A673 (cell line): ENCODE measurements at regions of chr19 and their contacts with region 1.

Region 1: DNA sequence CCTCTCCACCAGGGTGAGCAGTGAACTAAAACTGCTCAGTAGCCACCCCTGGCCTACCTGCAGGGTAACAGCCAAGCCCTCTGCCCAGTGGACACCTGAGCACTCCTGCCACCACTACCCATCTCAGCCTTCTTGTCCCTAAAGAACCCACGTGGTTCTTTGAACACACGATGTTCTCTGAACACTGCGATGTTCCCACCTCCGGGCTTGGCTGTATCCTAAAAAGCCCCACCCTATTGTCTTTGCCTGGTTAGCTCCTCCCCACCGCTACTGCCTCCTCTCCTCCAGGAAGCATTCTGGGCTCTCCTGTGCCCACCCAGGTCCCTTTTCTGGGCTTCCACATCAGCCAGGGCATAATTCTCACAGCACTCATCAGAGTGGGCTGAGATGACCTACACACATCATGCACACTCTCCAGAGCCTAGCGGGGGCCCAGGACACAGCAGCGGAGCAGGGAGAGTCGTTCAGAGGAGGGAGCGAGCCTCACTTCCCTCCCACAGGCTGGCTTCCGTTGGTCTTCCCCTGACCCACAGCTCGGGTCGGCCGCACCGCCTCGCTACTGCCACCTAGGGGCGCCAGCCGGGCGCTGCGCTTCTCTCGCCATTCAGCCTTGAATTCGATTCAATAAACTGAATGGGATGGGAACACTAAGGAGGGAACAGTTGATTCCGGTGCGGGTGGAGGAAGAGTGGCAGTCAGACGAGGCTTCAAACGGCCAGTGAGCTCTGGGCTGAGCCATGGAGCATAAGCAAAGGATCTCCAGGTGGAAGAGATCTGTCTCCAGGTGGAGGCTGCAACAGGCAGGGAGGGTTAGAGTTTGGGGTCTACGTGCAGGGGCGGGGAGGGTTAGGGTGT is 3.2 kb downstream of the ELAVL1 start:
- DNase-seq: peak; percentile 84
- H3K4me3 ChIP-seq: peak overlapping the region; percentile 29
- H3K27ac ChIP-seq: peak overlapping the region; percentile 44
- H3K4me1 ChIP-seq: peaks cover 19% of the 10 kb centered on the region
- H3K27me3 ChIP-seq: no peaks in the 10 kb centered on the region
- CTCF ChIP-seq: peak; percentile 98

Region 2: GRCh38 chr19:7868676-7869452 is 133.4 kb before region 1 on chr19:
- CTCF ChIA-PET with region 1: no interaction called
- POLR2A ChIA-PET with region 1: no interaction called
- intact Hi-C with region 1: no loop called
- DNase-seq: peak; percentile 91
- H3K4me3 ChIP-seq: peak overlapping the region; percentile 53
- H3K27ac ChIP-seq: peak overlapping the region; percentile 78
- H3K4me1 ChIP-seq: peaks cover 42% of the 10 kb centered on the region
- H3K27me3 ChIP-seq: no peaks in the 10 kb centered on the region
- CTCF ChIP-seq: peak; percentile 58; the same call in 1 of the 2 replicates

Region 3: GRCh38 chr19:7943444-7944176 is 58.6 kb before region 1 on chr19 and contains the start of gene TIMM44:
- CTCF ChIA-PET with region 1: interaction called, 6 read pairs
- POLR2A ChIA-PET with region 1: no interaction called
- intact Hi-C with region 1: loop called (anchors 5 kb)
- DNase-seq: peak; percentile 100
- H3K4me3 ChIP-seq: peak within 1 kb of the TSS; percentile 94
- H3K27ac ChIP-seq: peak within 1 kb of the TSS; percentile 99
- H3K4me1 ChIP-seq: peaks cover 3% of the 10 kb centered on the region
- H3K27me3 ChIP-seq: no peaks in the 10 kb centered on the region
- CTCF ChIP-seq: no peak
- total RNA-seq, gene TIMM44: 153 and 169 TPM in 2 replicates